Gastrocnemius medialis (tissue), 4 donors: ENCODE measurements at regions of chr9 and their contacts with region 1.

Region 1: DNA sequence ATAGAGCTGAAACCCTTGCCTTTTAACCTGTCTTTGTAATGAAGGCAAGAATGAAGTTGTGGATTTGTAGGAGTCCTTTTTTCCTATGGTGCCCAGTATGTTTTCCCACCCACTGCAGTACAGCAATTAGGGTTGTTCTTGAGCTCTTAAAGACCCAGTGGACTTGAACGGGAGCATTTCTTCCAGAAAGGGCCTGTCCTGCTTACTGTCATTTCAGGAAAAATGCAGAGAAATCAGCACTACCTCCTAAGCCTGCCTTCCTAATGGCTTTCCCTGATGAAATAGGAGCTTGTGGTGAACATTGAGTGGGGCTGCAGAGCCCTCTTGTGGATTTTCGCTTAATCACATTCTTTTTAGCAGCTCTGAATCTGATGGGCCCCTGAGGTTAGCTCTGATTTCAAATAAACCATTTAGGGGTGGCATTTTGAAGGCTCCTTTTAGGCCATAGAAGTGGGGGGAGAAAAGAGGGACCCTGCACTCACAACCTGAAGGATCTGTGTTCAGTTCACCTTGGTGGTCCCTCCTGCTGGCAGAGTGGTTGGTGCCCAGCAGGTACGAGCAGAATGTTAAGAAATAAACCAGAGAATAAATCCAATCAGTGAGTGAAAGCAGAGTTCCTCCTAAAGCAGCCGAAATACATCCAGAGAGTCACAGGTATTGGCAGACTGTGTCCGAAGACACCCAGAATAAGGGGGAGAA is 188.0 kb upstream of the KLF9 start:
- DNase-seq: peak; percentile 47 to 71
- ATAC-seq: peak; percentile 67 to 71
- H3K4me3 ChIP-seq: peak overlapping the region; percentile 18 to 47 (median 29)
- H3K27ac ChIP-seq: peak overlapping the region; percentile 86 to 96 (median 88)
- H3K4me1 ChIP-seq: peaks cover 25 to 37% of the 10 kb centered on the region in 2 donors
- H3K27me3 ChIP-seq: no peaks in the 10 kb centered on the region
- CTCF ChIP-seq: peak; percentile 81 to 93 (median 84)
- POLR2A ChIP-seq: no peak

Region 2: DNA sequence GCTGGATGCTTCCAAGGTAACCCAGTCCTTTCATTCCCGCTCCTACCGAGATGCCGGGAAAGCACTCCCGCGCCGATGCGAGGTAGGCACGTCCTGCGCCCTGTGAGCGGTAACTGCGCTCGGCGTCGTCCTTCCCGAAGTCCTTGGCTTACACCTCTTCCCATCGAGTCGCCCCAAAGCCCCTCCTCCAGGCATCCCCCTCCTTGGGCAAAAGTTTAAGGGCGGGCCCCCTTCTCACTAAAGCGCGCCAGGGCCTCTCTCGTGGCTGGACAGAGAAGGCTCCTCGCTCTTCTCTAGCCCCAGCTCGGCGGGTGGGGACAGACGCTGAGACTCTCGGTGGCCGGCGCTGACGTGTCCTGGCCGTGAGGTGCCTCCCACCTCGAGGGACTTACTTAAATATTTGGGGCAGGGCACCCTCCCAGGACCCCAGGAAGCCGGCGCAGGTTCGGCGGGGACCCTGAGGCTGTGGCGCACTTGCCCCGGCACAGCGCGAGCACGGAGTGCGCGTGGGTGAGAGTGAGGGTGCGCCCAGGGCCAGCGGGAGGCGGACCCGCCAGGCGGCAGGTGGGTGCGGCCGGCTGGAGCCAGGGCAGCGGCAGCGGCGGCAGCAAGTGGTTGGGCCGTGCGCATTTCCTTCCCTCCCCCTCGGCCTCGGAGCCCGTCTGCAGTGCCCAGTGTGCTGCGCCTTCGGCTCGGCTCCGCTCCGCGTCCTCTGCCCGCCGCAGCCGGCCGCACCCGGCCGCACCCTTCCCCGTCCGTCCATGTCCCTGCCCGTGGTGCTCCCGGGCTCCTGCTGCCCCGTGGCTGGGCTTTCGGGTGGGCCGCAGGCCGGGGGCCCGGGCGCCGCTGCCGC is 1277.7 kb before region 1 on chr9 and contains the start of gene ENTREP1:
- in situ Hi-C with region 1: no loop called
- intact Hi-C with region 1: loop called (anchors 10 kb)
- DNase-seq: peak; percentile 70 to 79
- ATAC-seq: peak; percentile 80 to 82
- H3K4me3 ChIP-seq: peak within 1 kb of the TSS; percentile 64 to 81 (median 79)
- H3K27ac ChIP-seq: peak within 1 kb of the TSS; percentile 84 to 98 (median 96)
- H3K4me1 ChIP-seq: peaks cover 33 to 35% of the 10 kb centered on the region in 2 donors
- H3K27me3 ChIP-seq: no peaks in the 10 kb centered on the region
- CTCF ChIP-seq: peak; percentile 16 to 43 (median 29)
- POLR2A ChIP-seq: peak; percentile 78 to 82
- total RNA-seq, gene ENTREP1: 10.8 to 26.8 (median 17.1) TPM

Region 3: GRCh38 chr9:69759421-69760277 is 842.8 kb before region 1 on chr9 and contains the start of gene PTAR1:
- in situ Hi-C with region 1: no loop called
- intact Hi-C with region 1: loop called (anchors 10 kb)
- DNase-seq: peak; percentile 78 to 86
- ATAC-seq: peak; percentile 92 to 94
- H3K4me3 ChIP-seq: peak within 1 kb of the TSS; percentile 75 to 87 (median 77)
- H3K27ac ChIP-seq: peak within 1 kb of the TSS; percentile 92 to 98 (median 94)
- H3K4me1 ChIP-seq: peaks cover 30 to 39% of the 10 kb centered on the region in 2 donors
- H3K27me3 ChIP-seq: no peaks in the 10 kb centered on the region
- CTCF ChIP-seq: peak in 1 of 5 experiments; percentile 31
- POLR2A ChIP-seq: peak; percentile 74 to 79
- total RNA-seq, gene PTAR1: 26.5 to 52.4 (median 40.6) TPM

Region 4: DNA sequence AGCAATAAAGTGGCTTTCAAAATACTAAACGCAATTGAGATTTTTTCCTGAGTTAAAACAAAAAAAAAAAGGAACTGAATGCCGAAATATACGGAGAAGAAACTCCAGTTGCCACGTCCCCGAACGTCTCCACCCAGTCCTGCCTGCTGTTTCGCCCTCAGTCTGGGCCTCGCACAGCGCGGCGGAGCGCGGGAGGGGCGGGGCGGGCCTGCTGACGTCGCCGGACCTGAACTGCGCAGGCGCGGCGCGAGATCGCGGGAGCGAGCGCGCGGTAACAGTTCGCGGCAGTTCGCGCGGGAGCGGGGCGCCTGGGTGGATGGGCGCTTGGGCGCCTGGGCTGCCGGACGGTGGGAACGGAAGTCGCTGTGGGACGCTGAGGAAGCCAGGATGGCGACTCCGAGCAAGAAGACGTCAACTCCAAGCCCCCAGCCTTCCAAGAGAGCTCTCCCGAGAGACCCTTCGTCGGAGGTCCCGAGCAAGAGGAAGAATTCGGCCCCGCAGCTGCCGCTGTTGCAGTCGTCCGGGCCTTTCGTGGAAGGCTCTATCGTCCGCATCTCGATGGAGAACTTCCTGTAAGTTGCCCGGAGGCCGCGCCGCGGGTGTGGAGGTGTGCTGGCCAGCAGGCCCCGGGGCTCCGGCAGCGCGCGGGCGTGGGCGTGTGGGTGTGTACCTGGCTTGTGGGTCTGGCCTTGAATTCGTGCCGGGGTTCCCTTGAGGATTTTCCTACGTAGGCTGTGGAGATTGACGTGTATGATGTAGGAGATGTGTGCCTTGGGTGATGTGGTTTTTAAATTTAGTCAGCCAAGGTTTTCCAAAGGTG is 343.6 kb before region 1 on chr9 and contains the start of gene SMC5:
- in situ Hi-C with region 1: loop called in 2 of 4 experiments (anchors 10 kb)
- intact Hi-C with region 1: loop called (anchors 2 kb)
- DNase-seq: peak; percentile 75 to 85
- ATAC-seq: peak; percentile 90 to 91
- H3K4me3 ChIP-seq: peak within 1 kb of the TSS; percentile 66 to 97 (median 90)
- H3K27ac ChIP-seq: peak within 1 kb of the TSS; percentile 87 to 95 (median 94)
- H3K4me1 ChIP-seq: peaks cover 39 to 43% of the 10 kb centered on the region in 2 donors
- H3K27me3 ChIP-seq: no peaks in the 10 kb centered on the region
- CTCF ChIP-seq: no peak
- POLR2A ChIP-seq: peak; percentile 96
- total RNA-seq, gene SMC5: 16.2 to 250 (median 20.5) TPM

Region 5: GRCh38 chr9:70347046-70347445 is 255.4 kb before region 1 on chr9:
- in situ Hi-C with region 1: loop called in 3 of 4 experiments (anchors 5 to 10 kb)
- intact Hi-C with region 1: loop called (anchors 1 kb)
- DNase-seq: no peak
- ATAC-seq: no peak
- H3K4me3 ChIP-seq: no peak overlapping the region
- H3K27ac ChIP-seq: no peak overlapping the region
- H3K4me1 ChIP-seq: peaks cover 0 to 3% of the 10 kb centered on the region in 2 donors
- H3K27me3 ChIP-seq: no peaks in the 10 kb centered on the region
- CTCF ChIP-seq: no peak
- POLR2A ChIP-seq: no peak

Region 6: GRCh38 chr9:70406434-70406862 is 196.0 kb before region 1 on chr9:
- in situ Hi-C with region 1: loop called in 1 of 4 experiments (anchors 10 kb)
- intact Hi-C with region 1: no loop called
- DNase-seq: no peak
- ATAC-seq: no peak
- H3K4me3 ChIP-seq: peak overlapping the region; percentile 14 to 98 (median 47)
- H3K27ac ChIP-seq: peak overlapping the region; percentile 78 to 100 (median 86)
- H3K4me1 ChIP-seq: peaks cover 82 to 88% of the 10 kb centered on the region in 2 donors
- H3K27me3 ChIP-seq: no peaks in the 10 kb centered on the region
- CTCF ChIP-seq: no peak
- POLR2A ChIP-seq: no peak

Region 7: DNA sequence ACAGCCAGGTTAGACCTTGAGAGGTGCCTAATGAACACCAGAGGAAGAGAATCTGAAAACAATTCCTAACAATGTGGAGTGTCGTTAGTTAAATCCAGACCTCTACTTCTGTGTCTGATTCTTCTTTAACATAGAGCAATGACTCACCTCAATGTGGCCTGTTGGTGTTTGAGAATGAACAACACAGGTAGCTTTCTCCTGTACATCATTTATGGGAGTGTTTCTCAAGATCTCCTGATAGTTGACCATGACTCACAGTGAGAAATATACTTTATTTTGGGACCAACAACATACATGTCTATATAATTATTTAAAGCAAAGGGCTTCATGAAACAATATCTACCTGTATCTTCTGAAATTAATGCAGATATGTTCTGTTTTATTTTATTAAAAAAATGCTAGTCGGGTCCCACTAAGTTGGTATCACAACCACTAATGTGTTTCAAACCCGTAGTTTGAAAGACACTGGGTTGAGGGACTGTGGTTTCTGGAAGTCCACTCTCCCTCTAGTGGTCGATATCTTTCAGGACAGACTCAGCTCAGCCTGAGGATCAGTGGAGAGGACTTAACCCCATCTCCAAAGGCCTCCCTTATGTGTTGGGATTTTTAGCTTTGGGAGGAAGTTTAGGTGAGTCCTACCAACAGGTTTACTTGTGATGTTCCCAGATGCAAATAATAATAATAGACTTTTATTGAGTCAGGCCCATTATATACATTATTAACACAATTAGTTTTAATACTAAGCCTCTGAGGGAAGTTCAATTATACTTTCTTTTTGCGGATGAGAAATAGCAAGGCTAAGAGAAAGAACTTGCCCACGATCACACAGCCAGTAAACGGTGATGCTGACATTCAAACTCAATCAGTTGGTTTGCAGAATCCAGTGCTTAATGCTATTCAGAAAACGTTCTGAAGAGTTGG is 118.0 kb before region 1 on chr9:
- in situ Hi-C with region 1: loop called (anchors 5 to 10 kb)
- intact Hi-C with region 1: loop called (anchors 2 kb)
- DNase-seq: peak; percentile 56 to 69
- ATAC-seq: peak; percentile 63 to 64
- H3K4me3 ChIP-seq: no peak overlapping the region
- H3K27ac ChIP-seq: peak overlapping the region; percentile 97 to 99 (median 98)
- H3K4me1 ChIP-seq: peaks cover 82 to 90% of the 10 kb centered on the region in 2 donors
- H3K27me3 ChIP-seq: no peaks in the 10 kb centered on the region
- CTCF ChIP-seq: peak; percentile 79 to 86 (median 81)
- POLR2A ChIP-seq: peak in 1 of 2 donors; percentile 26

Region 8: GRCh38 chr9:70701163-70701562 is 98.7 kb after region 1 on chr9:
- in situ Hi-C with region 1: no loop called
- intact Hi-C with region 1: no loop called
- DNase-seq: no peak
- ATAC-seq: no peak
- H3K4me3 ChIP-seq: no peak overlapping the region
- H3K27ac ChIP-seq: no peak overlapping the region
- H3K4me1 ChIP-seq: no peaks in the 10 kb centered on the region
- H3K27me3 ChIP-seq: no peaks in the 10 kb centered on the region
- CTCF ChIP-seq: no peak
- POLR2A ChIP-seq: no peak

Region 9: DNA sequence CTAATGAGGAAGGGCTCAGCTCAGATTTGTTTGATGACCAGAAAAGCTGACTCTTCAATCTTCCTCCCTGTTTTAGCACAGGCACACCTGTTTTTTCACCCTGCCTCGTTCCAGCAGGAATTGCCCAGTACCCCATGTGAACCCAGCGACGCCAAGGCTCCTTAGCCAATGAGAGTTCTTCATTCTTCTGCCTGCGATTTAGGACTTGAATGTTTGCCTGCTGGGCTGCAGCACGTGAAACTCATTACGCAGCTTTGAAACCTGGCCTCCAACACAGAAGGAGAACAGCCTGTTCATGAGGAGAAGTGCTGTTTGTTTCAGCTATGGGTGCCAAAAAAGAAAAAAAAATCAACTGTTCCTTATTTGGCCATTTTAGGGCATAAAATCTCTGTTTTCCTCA is 203.5 kb after region 1 on chr9:
- in situ Hi-C with region 1: no loop called
- intact Hi-C with region 1: no loop called
- DNase-seq: peak; percentile 22 to 45
- ATAC-seq: peak; percentile 61 to 83
- H3K4me3 ChIP-seq: no peak overlapping the region
- H3K27ac ChIP-seq: peak overlapping the region in 1 of 4 donors; percentile 50
- H3K4me1 ChIP-seq: peaks cover 0 to 4% of the 10 kb centered on the region in 2 donors
- H3K27me3 ChIP-seq: no peaks in the 10 kb centered on the region
- CTCF ChIP-seq: no peak
- POLR2A ChIP-seq: no peak